ENCODE measurements at regions of chr5 and their contacts with region 1.

Region 1: GRCh38 chr5:40605295-40605958 is 74.3 kb upstream of the PTGER4 start:
- DNase-seq: peak; percentile 39 to 52 (median 52)
- H3K4me3 ChIP-seq: peak overlapping the region in 1 of 2 donors; percentile 38
- H3K4me3 Mint-ChIP-seq: peak overlapping the region; percentile 77 to 93 (median 84)
- H3K27ac ChIP-seq: no peak overlapping the region
- H3K27ac Mint-ChIP-seq: peak overlapping the region in 6 of 7 donors; percentile 2 to 89 (median 79)
- H3K4me1 ChIP-seq: peaks cover 53% of the 10 kb centered on the region
- H3K4me1 Mint-ChIP-seq: peaks cover 33 to 59% (median 45%) of the 10 kb centered on the region in 4 donors
- H3K27me3 ChIP-seq: no peaks in the 10 kb centered on the region
- H3K27me3 Mint-ChIP-seq: no peaks in the 10 kb centered on the region

Region 2: DNA sequence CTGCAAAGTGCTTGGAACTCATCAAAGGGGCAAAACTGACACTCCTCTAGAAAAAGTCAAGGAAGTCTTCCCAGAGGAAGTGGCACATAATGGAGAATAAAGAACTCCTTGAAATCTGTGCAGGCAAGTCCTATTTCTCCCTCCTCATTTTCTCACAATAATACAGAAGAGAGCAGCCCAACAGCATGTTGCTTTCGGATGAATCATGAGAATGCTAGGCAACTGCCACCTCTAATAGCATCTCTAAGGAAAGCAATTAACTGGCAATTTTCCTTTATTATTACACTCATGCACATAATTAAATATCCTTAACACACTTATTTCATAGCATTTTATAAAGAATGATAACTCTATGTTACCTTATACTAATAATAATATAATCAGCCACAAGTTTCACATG is 47.9 kb before region 1 on chr5:
- CTCF ChIA-PET with region 1: no interaction called
- POLR2A ChIA-PET with region 1: no interaction called
- intact Hi-C with region 1: no loop called
- DNase-seq: no peak
- H3K4me3 ChIP-seq: no peak overlapping the region
- H3K4me3 Mint-ChIP-seq: no peak overlapping the region
- H3K27ac ChIP-seq: no peak overlapping the region
- H3K27ac Mint-ChIP-seq: no peak overlapping the region
- H3K4me1 ChIP-seq: no peaks in the 10 kb centered on the region
- H3K4me1 Mint-ChIP-seq: peaks cover 0 to 9% (median 4%) of the 10 kb centered on the region in 4 donors
- H3K27me3 ChIP-seq: no peaks in the 10 kb centered on the region
- H3K27me3 Mint-ChIP-seq: no peaks in the 10 kb centered on the region

Region 3: DNA sequence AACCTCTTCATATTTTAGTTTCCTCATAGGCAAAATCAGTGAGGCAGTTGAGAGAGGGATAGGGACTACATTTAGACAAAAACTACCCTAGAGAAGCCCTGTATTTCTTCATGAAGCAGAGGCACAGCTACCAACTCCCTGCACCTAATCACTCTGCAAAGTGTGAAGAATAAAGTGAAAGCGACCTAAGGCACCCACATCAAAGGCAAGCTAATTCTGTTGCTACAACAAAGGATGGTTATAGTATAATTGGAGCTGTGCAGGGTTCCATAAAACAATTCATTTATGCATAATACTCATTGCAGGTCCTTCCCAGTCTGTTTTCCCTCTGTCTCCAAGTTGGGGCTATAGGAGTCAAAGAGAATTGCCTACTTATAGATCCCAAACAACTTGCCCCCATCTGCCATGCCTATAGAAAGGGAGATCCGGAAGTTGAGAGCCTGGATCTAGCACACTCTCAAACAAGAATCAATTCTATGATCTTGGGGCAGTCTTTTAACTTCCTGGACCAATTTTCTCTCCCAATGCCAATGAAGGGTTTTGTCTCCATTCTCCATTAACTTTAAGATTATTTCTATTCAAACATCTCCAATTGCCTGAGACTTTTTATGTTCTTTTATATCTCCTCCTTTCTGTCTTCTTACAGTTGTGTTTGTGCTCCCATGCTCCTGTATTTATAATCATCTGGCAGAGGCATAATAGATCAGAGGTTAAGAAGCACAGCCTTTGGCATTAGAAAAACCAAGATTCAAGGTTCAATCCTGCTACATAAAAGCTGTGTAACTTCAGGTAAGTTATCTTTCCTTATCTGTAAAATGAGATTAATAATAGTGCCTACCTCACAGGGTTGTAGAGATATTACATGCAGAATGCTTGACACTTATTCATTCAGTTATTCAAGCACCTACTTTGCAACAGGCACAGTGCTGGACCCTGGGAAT is 18.3 kb after region 1 on chr5:
- CTCF ChIA-PET with region 1: interaction called, 8 read pairs
- POLR2A ChIA-PET with region 1: interaction called, 3 read pairs
- intact Hi-C with region 1: loop called (anchors 1 kb)
- DNase-seq: peak; percentile 60 to 67 (median 64)
- H3K4me3 ChIP-seq: no peak overlapping the region
- H3K4me3 Mint-ChIP-seq: peak overlapping the region in 7 of 8 donors; percentile 0 to 65 (median 49)
- H3K27ac ChIP-seq: no peak overlapping the region
- H3K27ac Mint-ChIP-seq: peak overlapping the region; percentile 68 to 96 (median 85)
- H3K4me1 ChIP-seq: peaks cover 29% of the 10 kb centered on the region
- H3K4me1 Mint-ChIP-seq: peaks cover 40 to 57% (median 46%) of the 10 kb centered on the region in 4 donors
- H3K27me3 ChIP-seq: no peaks in the 10 kb centered on the region
- H3K27me3 Mint-ChIP-seq: no peaks in the 10 kb centered on the region

Region 4: DNA sequence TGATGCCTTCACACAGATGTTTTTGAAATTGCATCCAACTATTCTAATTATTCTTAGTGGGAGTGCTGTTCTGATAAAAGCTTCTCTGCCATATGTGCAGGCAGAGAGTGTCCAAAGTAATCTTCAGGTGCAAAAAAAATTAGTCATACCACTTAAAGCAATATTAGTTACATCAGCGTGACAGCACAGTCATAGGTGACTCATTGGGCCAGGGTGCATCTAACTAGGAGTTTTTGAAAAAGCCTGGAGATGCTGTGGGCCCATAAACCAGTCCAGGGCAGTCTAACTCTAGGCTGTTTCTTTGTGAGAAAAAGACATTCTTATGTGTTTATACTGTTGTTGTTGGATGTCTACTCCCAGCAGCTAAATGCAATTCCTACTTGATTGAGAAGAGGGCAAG is 640.9 kb after region 1 on chr5:
- CTCF ChIA-PET with region 1: no interaction called
- POLR2A ChIA-PET with region 1: no interaction called
- intact Hi-C with region 1: no loop called
- DNase-seq: no peak
- H3K4me3 ChIP-seq: no peak overlapping the region
- H3K4me3 Mint-ChIP-seq: no peak overlapping the region
- H3K27ac ChIP-seq: no peak overlapping the region
- H3K27ac Mint-ChIP-seq: no peak overlapping the region
- H3K4me1 ChIP-seq: no peaks in the 10 kb centered on the region
- H3K4me1 Mint-ChIP-seq: no peaks in the 10 kb centered on the region
- H3K27me3 ChIP-seq: no peaks in the 10 kb centered on the region
- H3K27me3 Mint-ChIP-seq: no peaks in the 10 kb centered on the region